HCT116 (cell line): ENCODE measurements at regions of chr10 and their contacts with region 1.

Region 1: GRCh38 chr10:74863551-74863950 is 37.2 kb downstream of the KAT6B start:
- DNase-seq: no peak
- ATAC-seq: no peak
- H3K4me3 ChIP-seq: no peak overlapping the region
- H3K27ac ChIP-seq: no peak overlapping the region
- H3K4me1 ChIP-seq: no peaks in the 10 kb centered on the region
- H3K27me3 ChIP-seq: no peaks in the 10 kb centered on the region
- CTCF ChIP-seq: no peak
- POLR2A ChIP-seq: no peak
- RAD21 ChIP-seq: no peak

Region 2: DNA sequence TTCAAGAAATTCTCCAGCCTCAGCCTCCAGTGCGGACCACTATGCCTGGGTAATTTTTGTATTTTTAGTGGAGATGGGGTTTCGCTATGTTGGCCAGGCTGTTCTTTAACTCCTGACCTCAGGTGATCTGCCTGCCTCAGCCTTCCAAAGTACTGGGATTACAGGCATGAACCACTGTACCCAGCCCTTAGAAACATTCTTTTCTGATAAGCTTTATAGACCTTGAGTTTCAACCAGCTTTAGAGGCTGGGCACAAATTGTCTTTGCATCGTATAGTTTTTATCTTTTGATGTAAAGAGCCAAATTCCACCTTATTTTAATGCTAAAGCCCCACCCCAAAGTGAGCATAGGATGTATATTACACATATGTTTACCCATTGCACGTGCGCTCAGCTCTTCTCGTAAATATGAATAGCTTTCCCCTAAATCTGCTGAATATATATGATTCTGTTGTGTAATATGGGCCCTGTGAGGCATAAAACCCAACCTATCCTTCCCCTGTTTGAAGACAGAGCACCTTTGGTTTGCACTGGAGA is 587.7 kb before region 1 on chr10:
- CTCF ChIA-PET with region 1: no interaction called
- POLR2A ChIA-PET with region 1: no interaction called
- RAD21 ChIA-PET with region 1: no interaction called
- intact Hi-C with region 1: loop called (anchors 10 kb)
- DNase-seq: no peak
- ATAC-seq: no peak
- H3K4me3 ChIP-seq: no peak overlapping the region
- H3K27ac ChIP-seq: no peak overlapping the region
- H3K4me1 ChIP-seq: no peaks in the 10 kb centered on the region
- H3K27me3 ChIP-seq: no peaks in the 10 kb centered on the region
- CTCF ChIP-seq: no peak
- POLR2A ChIP-seq: no peak
- RAD21 ChIP-seq: no peak

Region 3: GRCh38 chr10:74813381-74814259 is 49.9 kb before region 1 on chr10:
- CTCF ChIA-PET with region 1: no interaction called
- POLR2A ChIA-PET with region 1: no interaction called
- RAD21 ChIA-PET with region 1: no interaction called
- intact Hi-C with region 1: no loop called
- DNase-seq: no peak
- ATAC-seq: no peak
- H3K4me3 ChIP-seq: no peak overlapping the region
- H3K27ac ChIP-seq: no peak overlapping the region
- H3K4me1 ChIP-seq: no peaks in the 10 kb centered on the region
- H3K27me3 ChIP-seq: no peaks in the 10 kb centered on the region
- CTCF ChIP-seq: no peak
- POLR2A ChIP-seq: no peak
- RAD21 ChIP-seq: no peak